ENCODE measurements at regions of chr17 and their contacts with region 1.

Region 1: GRCh38 chr17:40219073-40219860 is at the start of gene WIPF2:
- DNase-seq: peak; percentile 100
- H3K4me3 Mint-ChIP-seq: peak within 1 kb of the TSS; percentile 78
- H3K27ac Mint-ChIP-seq: peak within 1 kb of the TSS; percentile 36
- H3K4me1 Mint-ChIP-seq: peaks cover 31% of the 10 kb centered on the region
- H3K27me3 Mint-ChIP-seq: no peaks in the 10 kb centered on the region
- CTCF ChIP-seq: no peak
- total RNA-seq, gene WIPF2: 327 and 376 TPM in 2 replicates

Region 2: GRCh38 chr17:40062329-40063186 is 156.7 kb before region 1 on chr17 and contains the start of gene THRA:
- CTCF ChIA-PET with region 1: interaction called, 13 read pairs
- intact Hi-C with region 1: no loop called
- DNase-seq: peak; percentile 100
- H3K4me3 Mint-ChIP-seq: peak within 1 kb of the TSS; percentile 54
- H3K27ac Mint-ChIP-seq: peak within 1 kb of the TSS; percentile 27
- H3K4me1 Mint-ChIP-seq: peaks cover 55% of the 10 kb centered on the region
- H3K27me3 Mint-ChIP-seq: peaks cover 52% of the 10 kb centered on the region
- CTCF ChIP-seq: no peak
- total RNA-seq, gene THRA: 107 and 133 TPM in 2 replicates

Region 3: GRCh38 chr17:40098846-40099618 is 120.2 kb before region 1 on chr17:
- CTCF ChIA-PET with region 1: interaction called, 10 read pairs
- intact Hi-C with region 1: no loop called
- DNase-seq: peak; percentile 100
- H3K4me3 Mint-ChIP-seq: peak overlapping the region; percentile 80
- H3K27ac Mint-ChIP-seq: peak overlapping the region; percentile 85
- H3K4me1 Mint-ChIP-seq: peaks cover 73% of the 10 kb centered on the region
- H3K27me3 Mint-ChIP-seq: no peaks in the 10 kb centered on the region
- CTCF ChIP-seq: no peak

Region 4: DNA sequence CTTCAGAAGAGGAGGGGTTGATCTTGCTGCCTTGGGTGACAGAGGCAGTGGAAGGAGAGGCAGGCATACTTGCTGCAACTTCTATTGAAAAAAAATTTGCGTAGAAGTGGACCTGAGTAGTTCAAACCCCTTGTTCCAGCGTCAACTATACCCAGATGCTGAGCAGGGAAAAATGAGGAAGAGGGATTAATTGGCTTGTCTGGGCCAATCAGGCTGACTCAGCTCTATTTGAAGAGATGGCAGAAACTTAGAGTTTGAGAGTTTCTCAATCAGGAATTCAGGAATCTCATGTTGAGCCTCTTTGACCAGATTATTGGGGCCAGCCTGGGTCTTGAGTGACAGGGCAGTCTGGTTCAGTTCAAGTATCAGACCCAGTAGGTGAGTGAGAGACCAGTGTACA is 61.3 kb before region 1 on chr17:
- CTCF ChIA-PET with region 1: no interaction called
- intact Hi-C with region 1: no loop called
- DNase-seq: no peak
- H3K4me3 Mint-ChIP-seq: no peak overlapping the region
- H3K27ac Mint-ChIP-seq: no peak overlapping the region
- H3K4me1 Mint-ChIP-seq: no peaks in the 10 kb centered on the region
- H3K27me3 Mint-ChIP-seq: no peaks in the 10 kb centered on the region
- CTCF ChIP-seq: no peak

Region 5: DNA sequence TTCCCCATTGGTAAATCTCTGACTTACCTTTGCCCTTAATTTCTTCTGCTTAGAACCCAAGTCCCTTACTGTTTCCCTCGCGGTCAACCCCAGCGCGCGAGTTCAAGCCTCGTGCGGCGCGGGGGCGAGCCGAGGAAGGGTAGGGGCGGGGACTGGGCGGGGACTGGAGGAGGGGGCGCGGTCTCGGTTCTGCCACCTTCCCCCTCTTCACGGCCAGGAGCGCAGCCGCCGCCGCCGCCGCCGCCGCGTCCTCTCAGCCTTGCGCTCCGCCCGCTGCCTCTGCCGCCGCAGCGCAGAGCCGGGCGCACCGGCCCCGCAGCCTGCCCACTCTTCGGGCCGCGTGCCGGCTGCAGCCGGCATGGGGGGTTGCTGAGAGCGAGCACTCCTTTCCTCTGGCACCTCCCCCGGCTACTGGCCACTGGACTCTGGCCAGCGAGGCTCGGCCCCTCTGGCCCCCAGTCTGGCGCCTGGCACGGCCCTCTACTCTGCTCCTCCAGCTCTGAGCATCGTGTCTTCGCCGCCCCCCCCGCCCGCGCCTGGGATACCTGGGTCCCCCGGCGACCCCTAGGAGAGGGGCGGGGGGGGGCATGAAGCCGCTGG is 41.9 kb before region 1 on chr17 and contains the start of gene RAPGEFL1:
- CTCF ChIA-PET with region 1: interaction called, 18 read pairs
- intact Hi-C with region 1: no loop called
- DNase-seq: peak; percentile 100
- H3K4me3 Mint-ChIP-seq: peak within 1 kb of the TSS; percentile 76
- H3K27ac Mint-ChIP-seq: peak within 1 kb of the TSS; percentile 61
- H3K4me1 Mint-ChIP-seq: peaks cover 51% of the 10 kb centered on the region
- H3K27me3 Mint-ChIP-seq: no peaks in the 10 kb centered on the region
- CTCF ChIP-seq: no peak
- total RNA-seq, gene RAPGEFL1: 57.9 and 86.3 TPM in 2 replicates

Region 6: DNA sequence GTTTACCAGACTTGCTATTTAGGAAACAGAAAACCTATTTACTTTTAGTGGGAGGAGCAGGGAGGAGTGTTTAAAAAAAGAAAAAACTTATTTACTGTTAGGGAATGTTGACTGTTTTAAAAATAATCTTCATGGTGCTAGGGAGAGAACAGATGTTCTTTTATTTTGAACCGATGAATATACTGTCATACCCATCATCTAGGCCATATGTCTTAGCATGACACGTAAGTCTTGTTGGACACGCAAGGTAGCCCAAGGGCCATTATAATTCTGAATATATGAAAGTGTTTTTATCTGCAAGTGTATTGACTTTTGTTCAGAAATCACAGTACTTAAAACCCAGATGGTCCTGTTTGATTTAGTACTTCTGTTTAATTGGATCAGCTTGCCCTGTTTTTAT is 11.4 kb after region 1 on chr17:
- CTCF ChIA-PET with region 1: interaction called, 81 read pairs
- intact Hi-C with region 1: no loop called
- DNase-seq: no peak
- H3K4me3 Mint-ChIP-seq: no peak overlapping the region
- H3K27ac Mint-ChIP-seq: no peak overlapping the region
- H3K4me1 Mint-ChIP-seq: no peaks in the 10 kb centered on the region
- H3K27me3 Mint-ChIP-seq: no peaks in the 10 kb centered on the region
- CTCF ChIP-seq: no peak

Region 7: DNA sequence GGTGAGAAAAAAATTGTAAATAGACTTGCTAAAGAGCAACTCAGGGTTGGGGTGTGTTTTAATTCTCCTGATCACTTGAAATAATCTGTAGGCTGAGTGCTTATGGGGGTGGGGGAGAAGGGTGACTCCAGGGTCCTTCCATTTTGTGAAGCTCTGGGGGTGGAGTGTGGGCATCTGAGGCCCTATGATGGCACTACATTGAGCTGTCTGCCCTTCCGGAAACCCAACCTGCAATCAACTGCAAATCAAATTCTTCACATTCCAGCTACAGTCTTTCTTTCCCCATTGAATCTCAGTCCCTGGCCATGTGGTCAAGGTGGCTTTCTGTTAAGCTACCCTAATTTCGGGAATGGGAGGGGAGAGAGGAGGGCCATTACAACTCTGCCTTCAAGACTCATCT is 62.4 kb after region 1 on chr17:
- CTCF ChIA-PET with region 1: interaction called, 171 read pairs
- intact Hi-C with region 1: loop called (anchors 5 kb)
- DNase-seq: peak; percentile 80
- H3K4me3 Mint-ChIP-seq: peak overlapping the region; percentile 22
- H3K27ac Mint-ChIP-seq: peak overlapping the region; percentile 90
- H3K4me1 Mint-ChIP-seq: peaks cover 71% of the 10 kb centered on the region
- H3K27me3 Mint-ChIP-seq: no peaks in the 10 kb centered on the region
- CTCF ChIP-seq: no peak

Region 8: DNA sequence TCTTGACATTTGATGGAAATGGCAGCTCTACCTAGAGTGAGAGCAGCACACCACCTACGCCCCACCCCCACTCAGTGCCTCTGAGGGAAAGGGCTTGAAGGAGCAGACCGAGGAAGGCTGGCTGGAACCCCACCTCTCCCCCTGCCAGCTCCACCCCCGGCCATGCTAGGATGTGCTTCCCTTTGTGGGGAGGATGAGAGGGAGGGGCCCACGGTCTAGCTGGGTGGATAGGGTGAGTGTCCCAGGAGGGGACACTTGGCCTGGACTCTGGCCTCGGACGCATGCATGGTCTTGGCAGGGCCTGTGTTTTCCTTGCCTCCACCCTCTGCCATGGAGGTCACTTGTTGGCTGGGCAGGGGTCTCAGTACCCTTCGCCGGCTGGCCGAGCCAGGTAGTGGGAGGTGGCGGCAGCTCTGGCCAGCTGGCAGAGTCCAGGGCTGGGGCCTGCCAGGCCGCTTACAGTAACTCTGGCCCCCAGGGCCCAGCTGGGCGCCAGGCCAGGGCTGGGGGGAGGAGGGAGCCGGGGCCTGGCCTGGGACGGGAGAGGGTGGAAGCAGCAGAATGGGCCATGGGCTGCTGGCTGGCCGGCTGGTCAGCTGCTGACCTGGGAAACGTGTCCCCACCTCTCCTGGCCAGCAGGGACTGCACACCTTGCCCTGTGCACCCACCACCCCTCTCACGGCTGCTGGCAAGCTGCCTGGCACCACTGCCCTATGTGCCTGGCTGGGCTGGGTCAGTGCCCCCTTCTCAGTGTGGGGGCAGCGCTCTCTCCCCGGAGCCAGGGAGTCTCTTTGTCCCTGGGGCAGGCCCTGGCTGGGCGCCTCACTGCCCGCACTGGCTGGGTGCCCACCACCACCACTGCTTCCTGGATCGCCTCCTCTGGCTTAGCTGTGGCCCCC is 112.7 kb after region 1 on chr17:
- CTCF ChIA-PET with region 1: no interaction called
- intact Hi-C with region 1: no loop called
- DNase-seq: peak; percentile 87
- H3K4me3 Mint-ChIP-seq: peak overlapping the region; percentile 15
- H3K27ac Mint-ChIP-seq: peak overlapping the region; percentile 3
- H3K4me1 Mint-ChIP-seq: peaks cover 71% of the 10 kb centered on the region
- H3K27me3 Mint-ChIP-seq: no peaks in the 10 kb centered on the region
- CTCF ChIP-seq: peak; percentile 47

Measured in Calu3 (cell line).